Naive thymus-derived CD8-positive, alpha-beta T cell (primary cell): ENCODE measurements at regions of chr1 and their contacts with region 1.

Region 1: DNA sequence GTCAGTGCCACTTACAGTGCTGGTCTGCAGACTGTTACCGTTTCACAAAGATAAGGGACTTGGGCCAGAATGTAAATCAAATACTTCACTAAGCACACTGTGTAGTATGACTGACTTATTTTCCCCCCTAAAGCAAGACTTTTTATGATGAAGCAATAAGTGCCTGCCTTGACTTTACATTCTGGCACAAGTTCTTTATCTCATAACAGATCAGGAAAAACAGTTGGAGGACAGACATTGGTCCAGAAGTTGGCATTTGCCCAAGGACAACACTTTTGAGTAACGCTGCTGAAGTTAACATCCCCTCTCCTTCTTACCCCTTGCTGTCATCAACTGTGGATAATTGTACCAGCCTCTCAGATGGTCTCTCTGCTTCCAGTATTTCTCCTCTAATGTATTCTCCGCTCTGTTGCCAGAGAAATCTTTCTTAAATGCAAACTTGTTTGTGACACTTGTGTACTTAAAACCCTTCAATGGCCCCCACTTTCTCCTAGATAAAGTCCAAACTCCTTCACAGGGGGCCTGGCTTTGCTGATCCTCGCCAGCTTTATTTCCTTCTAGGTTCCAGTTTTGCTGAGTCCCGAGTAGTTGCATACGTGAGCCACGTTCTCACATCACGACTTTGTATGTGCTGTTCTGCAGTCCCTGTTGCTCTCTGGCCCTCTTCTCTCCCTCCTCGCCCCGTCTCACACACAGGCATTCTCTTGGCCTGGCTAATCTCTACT is 45.7 kb downstream of the S1PR1 start:
- DNase-seq: no peak
- ATAC-seq: no peak
- H3K4me3 Mint-ChIP-seq: peak overlapping the region in 8 of 10 donors; percentile 3 to 85 (median 48)
- H3K27ac Mint-ChIP-seq: peak overlapping the region; percentile 95 to 99 (median 98)
- H3K4me1 Mint-ChIP-seq: peaks cover 61 to 95% (median 94%) of the 10 kb centered on the region in 4 donors
- H3K27me3 Mint-ChIP-seq: no peaks in the 10 kb centered on the region

Region 2: DNA sequence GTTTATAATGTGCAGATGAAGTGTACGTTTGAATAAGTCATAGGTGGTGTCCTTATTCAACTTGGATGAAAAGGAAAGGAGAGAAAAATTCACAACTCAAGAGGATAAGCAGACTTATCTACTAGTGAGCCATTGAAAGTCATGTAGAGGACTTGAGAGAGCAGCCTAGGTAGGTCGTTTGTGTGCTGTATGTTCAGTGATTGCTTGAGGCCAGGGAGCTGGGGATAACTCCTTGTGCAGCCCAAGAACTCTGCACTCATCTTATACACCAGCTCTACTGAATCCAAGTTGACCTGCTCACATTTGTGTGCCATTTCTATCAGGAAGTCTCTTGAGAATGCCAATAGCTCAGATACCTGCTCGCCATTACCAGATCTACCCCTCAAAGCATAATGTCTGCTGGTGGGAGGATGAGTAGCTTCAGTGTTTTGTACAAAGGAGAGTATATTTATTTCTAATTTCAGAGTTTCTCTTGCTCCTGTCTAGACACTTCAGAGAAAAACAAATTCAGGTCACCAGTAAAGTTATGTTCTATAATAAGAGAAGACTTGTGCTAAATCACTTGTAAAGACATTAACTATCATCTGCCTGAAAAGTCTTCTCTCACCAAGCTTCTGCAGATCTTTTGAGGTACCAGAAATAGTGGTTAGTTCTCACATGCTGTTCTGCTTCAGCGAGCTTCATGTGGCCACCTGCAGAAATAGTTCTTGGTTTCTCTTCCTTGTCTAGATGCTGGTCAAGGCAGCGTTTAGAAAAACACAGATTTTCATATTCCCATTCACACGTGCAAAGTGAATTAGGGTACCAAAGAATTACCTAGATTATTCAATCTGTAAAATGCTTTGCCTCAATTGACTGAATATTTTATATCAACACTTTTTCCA is 34.8 kb before region 1 on chr1:
- POLR2A ChIA-PET with region 1: interaction called, 35 read pairs
- DNase-seq: no peak
- ATAC-seq: peak; percentile 53 to 64
- H3K4me3 Mint-ChIP-seq: peak overlapping the region in 8 of 10 donors; percentile 24 to 64 (median 45)
- H3K27ac Mint-ChIP-seq: peak overlapping the region; percentile 67 to 96 (median 80)
- H3K4me1 Mint-ChIP-seq: peaks cover 32 to 89% (median 76%) of the 10 kb centered on the region in 4 donors
- H3K27me3 Mint-ChIP-seq: no peaks in the 10 kb centered on the region

Region 3: DNA sequence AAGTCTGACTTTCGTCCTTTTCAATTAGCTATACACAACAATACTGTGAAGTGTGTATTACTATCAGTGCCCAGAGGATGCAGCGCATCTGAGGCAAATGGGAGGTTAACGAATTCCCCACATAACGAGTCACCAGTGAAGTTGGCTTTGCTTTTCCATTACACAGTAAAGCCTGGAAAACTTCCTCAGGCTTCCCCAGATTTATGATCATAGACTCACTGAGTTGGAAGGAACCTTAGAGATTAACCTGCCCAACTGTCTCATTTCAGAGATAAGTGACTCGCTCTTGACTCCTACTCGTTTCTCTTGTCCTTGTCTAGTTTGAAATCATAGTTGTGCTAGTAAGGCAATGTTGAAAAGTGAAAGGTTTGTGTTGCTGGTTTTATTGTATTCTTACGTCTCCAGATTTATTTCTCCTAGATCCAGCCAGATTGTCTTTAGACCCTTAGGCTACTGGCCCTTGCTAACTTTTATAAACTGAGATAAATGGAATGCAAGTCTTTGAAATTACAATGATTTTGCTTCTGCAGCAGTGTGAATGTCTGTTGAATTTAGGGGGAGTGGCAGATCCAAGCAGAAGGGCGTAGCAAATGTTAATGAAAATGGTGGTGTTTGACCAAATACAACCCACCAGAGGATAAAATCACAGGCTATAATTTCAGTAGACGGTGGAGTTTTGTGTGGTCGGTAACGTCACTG is 28.4 kb before region 1 on chr1:
- POLR2A ChIA-PET with region 1: interaction called, 15 read pairs
- DNase-seq: no peak
- ATAC-seq: peak in 1 of 2 donors; percentile 41
- H3K4me3 Mint-ChIP-seq: no peak overlapping the region
- H3K27ac Mint-ChIP-seq: peak overlapping the region in 1 of 10 donors; percentile 81
- H3K4me1 Mint-ChIP-seq: peaks cover 38 to 62% (median 60%) of the 10 kb centered on the region in 4 donors
- H3K27me3 Mint-ChIP-seq: no peaks in the 10 kb centered on the region

Region 4: DNA sequence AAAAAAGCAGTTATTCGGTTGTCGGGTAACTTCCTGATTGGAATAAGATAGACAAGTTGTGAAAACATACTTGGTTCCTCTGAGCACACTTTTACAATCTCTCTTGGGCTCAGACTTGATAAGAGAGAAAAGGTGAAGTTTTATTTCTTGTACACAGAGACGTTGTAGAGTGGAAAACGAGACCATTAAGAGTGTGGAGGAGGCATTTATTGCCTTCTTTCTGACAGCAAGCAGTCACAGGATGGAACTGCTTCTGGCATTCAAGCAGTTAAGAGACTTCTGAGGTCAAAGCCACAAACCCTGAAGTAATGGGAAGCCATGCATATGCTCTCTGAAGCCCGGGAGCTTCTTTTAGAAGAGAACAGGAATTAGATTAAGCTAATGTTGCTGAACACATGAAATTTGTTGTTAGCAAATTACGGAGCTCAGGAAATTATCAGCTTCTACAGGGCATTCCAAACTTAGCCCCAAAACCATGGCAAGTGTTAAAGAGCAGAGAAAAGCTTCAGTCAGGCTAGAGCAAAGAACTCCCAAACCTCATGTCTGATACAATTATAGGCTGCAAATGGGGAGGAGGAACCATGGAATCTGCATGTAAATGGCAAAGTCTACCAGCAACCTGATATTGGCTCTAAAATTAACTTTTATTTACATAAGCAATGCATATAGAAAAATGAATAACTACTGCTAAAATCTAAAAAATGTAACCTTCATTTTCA is 19.7 kb before region 1 on chr1:
- POLR2A ChIA-PET with region 1: interaction called, 36 read pairs
- DNase-seq: peak in 5 of 10 donors; percentile 21 to 67 (median 58)
- ATAC-seq: peak; percentile 65 to 77
- H3K4me3 Mint-ChIP-seq: peak overlapping the region; percentile 51 to 81 (median 80)
- H3K27ac Mint-ChIP-seq: peak overlapping the region; percentile 75 to 94 (median 90)
- H3K4me1 Mint-ChIP-seq: peaks cover 51 to 94% (median 90%) of the 10 kb centered on the region in 4 donors
- H3K27me3 Mint-ChIP-seq: no peaks in the 10 kb centered on the region